Activated naive CD8-positive, alpha-beta T cell treated with anti-CD3 and anti-CD28 coated beads, Interleukin-2, amount 10 ng/mL, durations not matched to agents 7 days and 5 days (primary cell): ENCODE measurements at regions of chr3 and their contacts with region 1.

Region 1: GRCh38 chr3:45688882-45689756 is at the start of gene SACM1L:
- DNase-seq: peak; percentile 96
- ATAC-seq: peak; percentile 86
- H3K4me3 Mint-ChIP-seq: peak within 1 kb of the TSS; percentile 96
- H3K27ac Mint-ChIP-seq: peak within 1 kb of the TSS; percentile 97
- H3K4me1 Mint-ChIP-seq: peaks cover 33% of the 10 kb centered on the region
- H3K27me3 Mint-ChIP-seq: peaks cover 2% of the 10 kb centered on the region
- total RNA-seq, gene SACM1L: 89.8 to 91.6 TPM

Region 2: DNA sequence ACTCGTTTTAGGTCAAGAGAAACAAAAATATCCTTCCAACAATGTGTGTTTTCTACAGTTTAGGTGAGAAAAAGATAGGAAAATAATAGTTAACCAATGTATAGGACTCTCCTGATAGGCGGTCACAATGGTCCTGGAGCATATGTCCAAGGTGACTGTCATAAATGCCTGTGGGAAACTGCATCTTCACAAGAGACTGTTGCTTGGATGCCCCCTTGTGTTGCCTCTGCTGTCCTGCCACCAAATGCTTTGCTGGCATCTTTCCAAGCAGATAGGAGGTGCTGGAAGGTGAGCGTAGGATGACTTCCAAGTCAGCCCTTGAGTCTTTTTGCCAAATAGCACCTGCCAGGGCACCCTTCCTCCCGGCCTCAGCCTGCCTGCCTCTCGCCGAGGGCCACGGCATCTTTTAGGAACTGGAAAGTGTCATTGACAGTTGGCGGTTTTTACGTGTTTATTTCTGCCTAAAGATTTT is 24.0 kb before region 1 on chr3:
- POLR2A ChIA-PET with region 1: interaction called, 11 read pairs
- DNase-seq: peak; percentile 53
- ATAC-seq: peak; percentile 46
- H3K4me3 Mint-ChIP-seq: peak overlapping the region; percentile 91
- H3K27ac Mint-ChIP-seq: peak overlapping the region; percentile 94
- H3K4me1 Mint-ChIP-seq: peaks cover 35% of the 10 kb centered on the region
- H3K27me3 Mint-ChIP-seq: no peaks in the 10 kb centered on the region

Region 3: DNA sequence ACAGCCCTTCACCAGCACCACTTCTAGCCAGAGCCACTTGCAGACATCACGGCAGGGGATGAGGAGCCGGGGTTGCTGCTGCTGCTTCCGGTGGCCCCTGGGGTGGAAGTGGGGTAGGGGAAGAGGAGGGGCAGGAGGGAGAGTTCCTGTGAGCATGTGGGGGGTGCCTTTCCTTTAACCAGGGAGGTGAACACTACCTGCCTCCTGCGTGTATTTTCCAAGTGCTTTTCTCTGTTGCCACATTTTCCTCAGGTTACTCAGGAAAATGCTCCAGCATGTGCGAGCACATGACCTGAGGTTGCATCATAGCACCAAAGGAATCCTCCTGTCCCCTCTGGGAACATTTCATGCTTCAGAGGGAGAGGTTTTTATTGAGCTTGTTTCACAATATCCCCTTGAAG is 12.1 kb before region 1 on chr3:
- POLR2A ChIA-PET with region 1: interaction called, 24 read pairs
- DNase-seq: peak; percentile 70
- ATAC-seq: peak; percentile 98
- H3K4me3 Mint-ChIP-seq: peak overlapping the region; percentile 83
- H3K27ac Mint-ChIP-seq: peak overlapping the region; percentile 98
- H3K4me1 Mint-ChIP-seq: peaks cover 23% of the 10 kb centered on the region
- H3K27me3 Mint-ChIP-seq: no peaks in the 10 kb centered on the region